ENCODE measurements at regions of chr21 and their contacts with region 1.

Region 1: DNA sequence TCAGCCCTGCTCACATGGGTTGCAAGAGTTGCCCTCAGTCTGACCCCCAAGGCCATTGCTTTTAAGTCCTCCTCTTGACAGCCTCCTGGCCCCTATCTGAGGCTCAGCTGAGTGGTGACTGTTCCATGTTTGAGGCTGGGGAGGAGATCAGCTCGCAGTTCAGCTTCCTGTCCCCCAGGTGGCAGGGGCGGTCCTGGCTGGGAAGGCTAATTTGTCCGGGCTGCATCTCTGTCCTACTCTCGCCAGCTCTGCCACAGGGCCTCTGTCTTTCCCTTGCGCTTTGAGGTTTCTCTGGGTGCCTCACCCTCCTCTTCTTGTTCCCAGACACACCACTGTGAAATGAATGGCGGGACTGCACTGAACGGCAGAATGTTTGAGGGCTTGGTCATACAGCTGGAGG is 157.3 kb downstream of the KCNJ6 start:
- DNase-seq: no peak
- H3K4me3 ChIP-seq: no peak overlapping the region
- H3K27me3 ChIP-seq: peaks cover 4% of the 10 kb centered on the region
- CTCF ChIP-seq: peak; percentile 92

Region 2: DNA sequence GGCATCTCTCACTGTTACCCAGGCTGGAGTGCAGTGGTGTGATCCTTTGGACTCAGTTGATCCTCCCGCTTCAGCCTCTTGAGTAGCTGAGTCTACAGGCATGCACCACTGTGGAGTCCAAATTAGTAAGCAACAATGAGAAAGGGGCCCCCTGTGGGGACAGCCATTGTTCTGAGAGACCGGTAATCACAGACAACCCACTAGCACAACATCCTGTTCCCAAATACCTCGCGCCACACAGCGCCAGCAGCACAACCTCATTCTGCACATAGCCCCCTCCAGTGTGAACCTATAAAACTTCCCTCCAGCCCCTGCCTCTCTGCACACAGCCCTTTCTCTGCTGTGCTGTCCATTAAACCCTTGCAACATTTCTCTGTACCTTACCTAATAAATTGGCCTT is 166.0 kb before region 1 on chr21:
- CTCF ChIA-PET with region 1: no interaction called
- POLR2A ChIA-PET with region 1: no interaction called
- DNase-seq: no peak
- H3K4me3 ChIP-seq: no peak overlapping the region
- H3K27me3 ChIP-seq: peaks cover 9% of the 10 kb centered on the region
- CTCF ChIP-seq: no peak

Region 3: GRCh38 chr21:37871121-37871862 is 112.3 kb after region 1 on chr21:
- CTCF ChIA-PET with region 1: interaction called, 17 read pairs
- POLR2A ChIA-PET with region 1: no interaction called
- DNase-seq: no peak
- H3K4me3 ChIP-seq: no peak overlapping the region
- H3K27me3 ChIP-seq: no peaks in the 10 kb centered on the region
- CTCF ChIP-seq: no peak

Region 4: DNA sequence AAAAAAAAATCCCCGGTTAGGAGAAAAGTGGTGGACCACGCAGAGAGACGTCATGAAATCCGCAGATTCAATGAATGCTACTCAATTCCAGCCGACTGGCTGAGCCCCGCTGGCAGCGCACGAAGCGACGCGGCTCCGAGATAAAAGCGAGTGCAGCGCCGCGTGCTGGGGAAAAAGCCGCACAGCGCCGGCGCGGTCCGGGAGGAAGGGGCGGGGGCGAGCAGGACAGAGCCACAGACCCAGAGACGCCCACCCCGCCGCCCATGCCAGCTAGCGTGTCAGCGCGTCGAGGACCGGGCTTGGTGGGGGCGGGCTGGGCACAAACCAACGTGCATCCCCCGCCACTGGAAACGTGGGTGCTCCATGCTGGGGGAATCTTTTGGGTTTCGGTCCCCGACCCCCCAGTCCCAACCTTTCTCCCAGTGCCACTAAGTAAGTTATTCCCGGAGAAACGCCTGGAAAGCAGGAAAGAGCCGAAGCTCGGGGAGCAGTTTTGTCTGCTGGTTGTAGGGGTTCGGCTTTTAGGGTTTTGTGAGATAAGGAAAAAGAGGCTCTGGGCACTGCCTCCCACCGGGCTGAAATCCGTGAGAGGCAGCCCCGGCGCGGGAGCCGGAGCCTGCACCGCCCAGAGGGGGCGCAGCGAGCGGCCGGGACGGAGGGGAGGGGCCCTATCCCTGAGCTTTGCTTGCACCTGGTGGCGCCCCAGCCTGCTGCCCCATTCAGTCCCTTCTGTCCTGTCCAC is 157.5 kb after region 1 on chr21 and contains the start of gene KCNJ6:
- CTCF ChIA-PET with region 1: interaction called, 42 read pairs
- POLR2A ChIA-PET with region 1: interaction called, 3 read pairs
- DNase-seq: no peak
- H3K4me3 ChIP-seq: peak within 1 kb of the TSS; percentile 39
- H3K27me3 ChIP-seq: peaks cover 19% of the 10 kb centered on the region
- CTCF ChIP-seq: peak; percentile 89
- polyA plus RNA-seq, gene KCNJ6: 0.01 TPM in 2 replicates

Measured in BJ (cell line).